Gastrocnemius medialis (tissue), 4 donors: ENCODE measurements at regions of chr6 and their contacts with region 1.

Region 1: GRCh38 chr6:4135665-4136353 is 434 bp upstream of the ECI2 start:
- DNase-seq: peak; percentile 93 to 94
- ATAC-seq: peak; percentile 78 to 79
- H3K4me3 ChIP-seq: peak overlapping the region; percentile 80 to 99 (median 88)
- H3K27ac ChIP-seq: peak overlapping the region; percentile 90 to 98 (median 95)
- H3K4me1 ChIP-seq: peaks cover 19 to 29% of the 10 kb centered on the region in 2 donors
- H3K27me3 ChIP-seq: no peaks in the 10 kb centered on the region
- CTCF ChIP-seq: no peak
- POLR2A ChIP-seq: peak; percentile 53 to 59

Region 2: DNA sequence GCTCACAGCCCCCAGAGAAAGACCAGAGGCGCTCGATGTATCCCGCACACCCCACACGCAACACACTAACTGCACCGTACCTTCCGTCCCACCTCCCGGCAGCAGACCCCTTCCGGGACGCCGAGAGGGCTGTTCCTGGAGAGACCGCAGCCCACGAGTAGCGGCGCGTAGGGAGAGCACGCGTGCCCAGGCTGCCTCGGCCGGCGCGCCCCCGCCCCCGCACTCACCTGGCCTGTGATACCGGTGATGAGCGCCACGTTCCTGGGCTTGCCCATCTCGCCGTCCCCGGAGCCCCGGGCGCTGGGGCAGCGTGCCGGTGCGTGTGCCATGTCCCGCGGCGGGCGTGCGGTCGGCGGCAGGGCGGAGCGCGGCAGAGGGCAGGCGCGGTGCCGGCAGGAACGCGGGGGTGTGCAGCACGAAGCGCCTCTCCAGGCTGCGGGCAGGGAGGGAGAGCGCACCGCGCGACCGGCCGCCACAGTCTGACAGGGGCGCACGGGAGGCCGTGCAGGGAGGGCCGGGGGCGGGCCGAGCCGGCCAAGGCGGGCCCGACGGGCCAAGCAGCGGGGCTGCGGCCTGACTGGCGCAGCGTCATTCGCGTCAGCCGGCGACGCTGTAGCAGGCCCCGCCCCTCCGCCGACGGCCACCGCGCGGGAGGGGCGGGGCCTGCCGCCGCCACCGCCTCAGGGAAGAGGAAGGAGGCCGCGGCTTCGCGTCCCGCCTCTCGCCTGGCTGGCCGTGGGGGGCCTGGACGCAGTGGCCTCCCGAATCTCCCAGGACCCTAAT is 1890.5 kb before region 1 on chr6 and contains the start of gene GMDS:
- in situ Hi-C with region 1: no loop called
- intact Hi-C with region 1: loop called (anchors 5 kb)
- DNase-seq: peak; percentile 64 to 78
- ATAC-seq: peak; percentile 90
- H3K4me3 ChIP-seq: peak within 1 kb of the TSS; percentile 70 to 96 (median 71)
- H3K27ac ChIP-seq: peak within 1 kb of the TSS; percentile 88 to 96 (median 90)
- H3K4me1 ChIP-seq: peaks cover 5 to 13% of the 10 kb centered on the region in 2 donors
- H3K27me3 ChIP-seq: no peaks in the 10 kb centered on the region
- CTCF ChIP-seq: peak in 1 of 5 experiments; percentile 17
- POLR2A ChIP-seq: peak; percentile 91 to 96
- total RNA-seq, gene GMDS: 3.4 to 7.2 (median 4.6) TPM

Region 3: DNA sequence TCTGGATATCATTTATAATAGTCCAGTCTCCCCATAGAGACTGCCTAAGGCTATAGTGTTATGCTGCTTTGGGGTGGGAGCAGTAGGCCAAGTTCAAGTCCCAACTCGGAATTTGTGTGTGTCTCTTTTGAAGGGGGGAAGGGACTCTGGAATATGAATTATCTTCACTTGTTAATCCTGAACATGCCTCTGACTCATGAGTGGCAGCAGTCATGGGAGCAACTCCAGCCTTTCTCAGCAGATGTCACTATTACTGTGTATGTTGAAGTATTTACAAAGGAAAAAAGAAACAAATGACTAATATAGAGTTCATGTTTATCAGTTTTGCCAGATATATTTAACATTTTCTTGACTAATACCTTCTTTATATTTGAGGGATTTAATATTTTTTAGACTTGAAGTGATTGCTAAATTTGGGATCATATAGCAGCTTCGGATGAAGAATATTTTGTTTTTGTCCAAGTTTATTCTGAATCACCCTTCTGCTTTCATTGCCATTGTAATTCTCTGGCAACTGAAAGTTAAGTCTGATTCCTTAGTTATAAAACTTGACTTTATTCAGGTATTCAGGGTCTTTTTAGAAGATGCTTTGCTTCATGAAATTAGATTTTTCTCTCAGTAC is 80.3 kb before region 1 on chr6:
- in situ Hi-C with region 1: no loop called
- intact Hi-C with region 1: loop called (anchors 2 kb)
- DNase-seq: peak; percentile 40 to 49
- ATAC-seq: peak; percentile 93 to 95
- H3K4me3 ChIP-seq: no peak overlapping the region
- H3K27ac ChIP-seq: peak overlapping the region; percentile 71 to 76 (median 71)
- H3K4me1 ChIP-seq: peaks cover 4% of the 10 kb centered on the region in 2 donors
- H3K27me3 ChIP-seq: no peaks in the 10 kb centered on the region
- CTCF ChIP-seq: peak in 4 of 5 experiments; percentile 45 to 64 (median 52)
- POLR2A ChIP-seq: no peak

Region 4: GRCh38 chr6:4108561-4109093 is 27.2 kb before region 1 on chr6:
- in situ Hi-C with region 1: no loop called
- intact Hi-C with region 1: loop called (anchors 2 kb)
- DNase-seq: no peak
- ATAC-seq: peak; percentile 36 to 55
- H3K4me3 ChIP-seq: no peak overlapping the region
- H3K27ac ChIP-seq: peak overlapping the region; percentile 75 to 82 (median 77)
- H3K4me1 ChIP-seq: peaks cover 37 to 42% of the 10 kb centered on the region in 2 donors
- H3K27me3 ChIP-seq: no peaks in the 10 kb centered on the region
- CTCF ChIP-seq: no peak
- POLR2A ChIP-seq: no peak

Region 5: DNA sequence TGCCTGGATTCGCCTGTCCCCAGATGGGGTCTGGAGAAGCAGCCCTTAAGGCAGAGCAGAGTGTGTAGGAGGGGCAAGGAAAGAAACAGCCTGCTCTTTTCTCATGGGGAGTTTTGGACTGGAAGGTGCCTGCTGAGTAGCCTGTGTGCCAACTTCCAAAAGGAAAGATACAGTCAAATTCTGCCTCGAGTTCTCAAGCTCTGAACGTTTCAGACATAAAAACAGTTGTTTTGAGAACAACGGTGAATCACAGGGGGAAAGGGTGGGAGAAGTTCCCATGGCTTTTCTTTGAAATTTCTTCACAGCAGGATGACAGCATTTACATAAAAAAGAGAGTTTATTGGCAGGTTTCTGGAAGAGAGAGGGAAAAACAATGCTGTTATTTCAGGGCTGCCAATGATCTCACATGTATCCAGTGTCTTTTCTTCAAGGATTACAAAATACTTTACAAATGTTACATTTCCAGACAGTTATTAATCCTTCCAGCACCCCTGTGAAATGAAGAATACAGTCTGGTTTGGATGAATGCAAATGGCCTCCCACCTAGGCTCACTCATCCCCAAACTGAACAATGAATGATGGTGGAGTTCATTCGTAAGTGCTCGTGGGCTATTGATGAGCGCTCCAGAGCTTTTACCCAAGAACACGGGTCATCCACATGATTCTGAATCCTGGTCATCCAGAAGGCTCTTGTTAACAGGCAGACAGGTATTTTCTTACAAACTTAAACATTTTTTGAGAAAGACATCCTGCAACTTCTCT is 33.4 kb after region 1 on chr6:
- in situ Hi-C with region 1: no loop called
- intact Hi-C with region 1: no loop called
- DNase-seq: no peak
- ATAC-seq: no peak
- H3K4me3 ChIP-seq: no peak overlapping the region
- H3K27ac ChIP-seq: no peak overlapping the region
- H3K4me1 ChIP-seq: no peaks in the 10 kb centered on the region
- H3K27me3 ChIP-seq: no peaks in the 10 kb centered on the region
- CTCF ChIP-seq: no peak
- POLR2A ChIP-seq: no peak

Region 6: GRCh38 chr6:4727671-4728435 is 592.0 kb after region 1 on chr6:
- in situ Hi-C with region 1: no loop called
- intact Hi-C with region 1: no loop called
- DNase-seq: no peak
- ATAC-seq: no peak
- H3K4me3 ChIP-seq: no peak overlapping the region
- H3K27ac ChIP-seq: no peak overlapping the region
- H3K4me1 ChIP-seq: no peaks in the 10 kb centered on the region
- H3K27me3 ChIP-seq: no peaks in the 10 kb centered on the region
- CTCF ChIP-seq: no peak
- POLR2A ChIP-seq: no peak

Region 7: DNA sequence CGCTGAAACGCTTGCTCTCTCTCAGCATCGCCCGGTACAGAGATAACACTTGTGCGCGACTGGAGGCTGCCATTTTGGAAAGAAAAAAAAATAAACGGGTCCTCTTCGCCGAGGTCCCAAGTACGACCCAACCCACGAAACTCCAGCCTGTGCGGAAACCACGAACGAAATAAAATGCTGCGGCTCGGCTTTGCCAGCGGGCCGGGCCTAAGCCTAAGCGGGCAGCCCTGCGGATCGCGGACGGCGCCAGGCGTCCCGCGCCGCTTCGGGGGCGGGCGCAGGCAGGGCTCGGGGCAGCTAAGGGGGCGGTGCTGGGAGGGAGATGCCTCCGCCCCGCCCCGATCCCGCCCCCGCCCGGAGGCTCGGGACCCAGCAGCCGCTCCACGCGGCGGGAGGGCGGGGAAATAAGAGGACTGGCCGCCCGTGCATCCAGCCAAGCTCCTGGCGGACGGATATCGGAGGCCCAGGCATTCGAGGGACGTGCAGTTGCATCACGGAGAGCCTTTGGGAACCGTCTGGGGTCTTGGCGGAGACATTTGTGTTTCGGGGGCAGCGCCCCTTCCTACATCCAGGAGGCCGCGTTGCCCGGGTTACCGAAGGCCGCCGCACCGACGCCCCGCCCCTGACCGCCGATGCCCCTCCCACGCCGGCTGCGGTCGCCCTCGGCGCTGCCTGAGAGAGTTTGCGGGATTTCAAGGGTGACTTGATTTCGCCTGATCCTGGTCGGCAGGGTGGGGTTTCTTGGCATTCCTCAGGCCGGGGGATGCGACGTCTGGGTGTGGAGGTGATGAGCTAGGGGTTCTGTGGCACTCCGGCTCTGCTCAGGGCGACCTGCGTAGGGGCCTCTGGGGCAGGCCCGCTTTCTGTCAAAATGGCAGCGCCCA is 1125.1 kb after region 1 on chr6 and contains the starts of genes FARS2 and LYRM4:
- in situ Hi-C with region 1: no loop called
- intact Hi-C with region 1: loop called (anchors 10 kb)
- DNase-seq: peak; percentile 64 to 81
- ATAC-seq: peak; percentile 93 to 94
- H3K4me3 ChIP-seq: peak within 1 kb of the TSS; percentile 58 to 97 (median 86)
- H3K27ac ChIP-seq: peak within 1 kb of the TSS; percentile 85 to 99 (median 94)
- H3K4me1 ChIP-seq: peaks cover 15 to 24% of the 10 kb centered on the region in 2 donors
- H3K27me3 ChIP-seq: no peaks in the 10 kb centered on the region
- CTCF ChIP-seq: peak in 2 of 5 experiments; percentile 36 to 45
- POLR2A ChIP-seq: peak; percentile 60 to 68
- total RNA-seq, gene FARS2: 13.6 to 24.0 (median 15.8) TPM
- total RNA-seq, gene LYRM4: 8.4 to 20.1 (median 12.2) TPM